Tibial artery (tissue), 4 donors: ENCODE measurements at regions of chr1 and their contacts with region 1.

Region 1: DNA sequence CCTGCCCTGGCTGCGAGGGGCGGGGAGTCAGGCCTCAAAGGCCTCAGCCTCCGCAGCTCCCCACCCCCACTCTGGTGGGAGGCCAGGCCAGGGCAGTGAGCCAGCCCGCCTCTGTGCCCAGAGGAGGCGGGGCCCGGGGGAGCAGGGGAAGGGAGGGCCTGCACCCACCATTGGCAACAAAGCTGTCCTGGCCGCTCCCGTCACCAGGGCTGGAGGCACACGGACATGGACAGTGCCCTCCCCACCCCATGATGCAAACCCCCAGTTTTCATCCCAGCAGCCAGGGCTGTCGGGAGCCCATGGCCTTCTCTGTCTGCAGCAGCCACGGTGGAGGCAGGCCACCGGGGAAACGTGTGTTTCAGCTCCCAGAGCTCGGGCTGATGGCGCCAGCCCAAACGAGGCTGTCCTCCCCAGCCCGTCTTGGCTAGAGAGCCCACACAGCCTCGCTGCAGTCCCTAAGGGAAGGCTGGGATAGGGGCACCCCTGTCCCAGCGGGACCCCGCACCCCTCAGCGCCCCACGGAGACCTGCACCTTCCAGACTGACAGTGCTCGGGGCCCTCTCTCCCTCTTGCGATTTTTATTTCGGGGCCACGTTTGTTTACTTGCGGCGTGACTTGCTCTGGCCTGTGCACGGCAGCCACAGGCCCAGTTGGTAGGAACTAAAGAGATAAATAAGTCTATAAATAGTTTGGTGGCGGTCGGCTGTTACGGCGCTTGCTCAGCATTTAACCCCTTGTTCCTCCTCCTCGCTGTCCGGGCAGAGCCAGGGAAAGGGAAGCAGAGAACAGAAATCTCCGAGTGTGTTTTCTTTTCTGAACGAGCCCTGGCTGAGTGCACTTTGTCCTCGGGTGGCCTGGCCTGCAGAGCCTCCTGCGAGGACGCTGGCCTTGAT is 101.8 kb downstream of the PRDM16 start:
- DNase-seq: peak; percentile 84 to 97
- H3K4me3 ChIP-seq: peak overlapping the region; percentile 41 to 52
- H3K27ac ChIP-seq: peak overlapping the region; percentile 88
- H3K4me1 ChIP-seq: peaks cover 6 to 81% (median 73%) of the 10 kb centered on the region in 4 donors
- H3K27me3 ChIP-seq: no peaks in the 10 kb centered on the region
- CTCF ChIP-seq: no peak

Region 2: DNA sequence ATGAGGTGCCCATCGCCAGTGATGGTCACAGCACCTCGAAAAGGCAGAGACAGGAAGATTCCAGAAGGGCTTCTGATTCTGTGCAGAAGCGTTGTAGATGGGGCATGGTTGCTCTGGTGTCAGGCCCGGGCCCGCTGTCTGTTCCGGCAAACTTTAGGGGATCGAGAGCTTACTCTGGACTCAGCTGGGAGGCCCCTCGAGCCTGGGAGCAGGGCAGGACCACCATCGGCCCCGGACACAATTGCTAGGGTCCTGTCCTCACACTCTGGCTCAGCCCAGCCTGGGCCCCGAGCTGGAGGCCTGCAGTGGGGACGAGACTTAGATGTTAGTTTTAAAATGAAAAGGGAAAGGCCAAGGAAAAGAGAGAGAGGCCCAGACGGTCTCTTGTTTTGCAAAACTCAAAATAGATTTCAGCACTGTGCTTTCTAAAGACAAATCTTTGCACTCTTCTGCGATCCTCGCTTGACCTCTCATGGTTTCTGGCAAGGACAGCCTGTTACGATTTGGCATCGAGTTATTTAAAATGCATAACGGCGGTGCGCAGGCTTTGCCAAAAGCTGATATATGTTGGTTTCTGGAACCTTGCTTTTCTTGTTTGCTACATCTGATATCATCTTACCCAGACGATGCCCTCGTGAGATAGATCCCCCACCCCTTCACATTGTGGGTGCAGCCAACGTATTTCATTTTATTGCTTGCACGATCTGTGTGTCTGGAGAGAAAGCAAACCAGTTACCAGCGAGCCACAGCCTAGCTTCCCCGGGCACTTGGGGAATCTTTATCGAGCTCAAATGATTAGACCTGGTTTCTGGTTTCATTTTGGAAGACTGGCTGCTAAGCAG is 43.8 kb before region 1 on chr1:
- intact Hi-C with region 1: loop called (anchors 5 kb)
- DNase-seq: no peak
- H3K4me3 ChIP-seq: peak overlapping the region in 1 of 2 donors; percentile 27
- H3K27ac ChIP-seq: peak overlapping the region; percentile 90
- H3K4me1 ChIP-seq: peaks cover 6 to 100% (median 89%) of the 10 kb centered on the region in 4 donors
- H3K27me3 ChIP-seq: no peaks in the 10 kb centered on the region
- CTCF ChIP-seq: no peak

Region 3: GRCh38 chr1:3222042-3222692 is 51.4 kb after region 1 on chr1:
- intact Hi-C with region 1: loop called (anchors 1 kb)
- DNase-seq: peak; percentile 32 to 90
- H3K4me3 ChIP-seq: no peak overlapping the region
- H3K27ac ChIP-seq: peak overlapping the region; percentile 67 to 81
- H3K4me1 ChIP-seq: peaks cover 0 to 90% (median 65%) of the 10 kb centered on the region in 4 donors
- H3K27me3 ChIP-seq: no peaks in the 10 kb centered on the region
- CTCF ChIP-seq: peak in 1 of 2 experiments; percentile 7

Region 4: GRCh38 chr1:3483801-3484444 is 313.1 kb after region 1 on chr1:
- intact Hi-C with region 1: no loop called
- DNase-seq: no peak
- H3K4me3 ChIP-seq: no peak overlapping the region
- H3K27ac ChIP-seq: no peak overlapping the region
- H3K4me1 ChIP-seq: no peaks in the 10 kb centered on the region
- H3K27me3 ChIP-seq: peaks cover 0 to 14% of the 10 kb centered on the region in 2 donors
- CTCF ChIP-seq: peak; percentile 44 to 54